Dorsolateral prefrontal cortex (tissue), 120 donors: ENCODE measurements at regions of chr14 and their contacts with region 1.

Region 1: GRCh38 chr14:22852940-22853767 is 16.8 kb downstream of the MMP14 start:
- DNase-seq: peak; percentile 53 to 90 (median 84)
- H3K4me3 ChIP-seq: peak overlapping the region; percentile 29 to 72 (median 51)
- H3K27ac ChIP-seq: peak overlapping the region in 9 of 59 donors; percentile 9 to 79 (median 62)
- H3K27me3 ChIP-seq: no peaks in the 10 kb centered on the region
- CTCF ChIP-seq: peak; percentile 59 to 98 (median 90)

Region 2: DNA sequence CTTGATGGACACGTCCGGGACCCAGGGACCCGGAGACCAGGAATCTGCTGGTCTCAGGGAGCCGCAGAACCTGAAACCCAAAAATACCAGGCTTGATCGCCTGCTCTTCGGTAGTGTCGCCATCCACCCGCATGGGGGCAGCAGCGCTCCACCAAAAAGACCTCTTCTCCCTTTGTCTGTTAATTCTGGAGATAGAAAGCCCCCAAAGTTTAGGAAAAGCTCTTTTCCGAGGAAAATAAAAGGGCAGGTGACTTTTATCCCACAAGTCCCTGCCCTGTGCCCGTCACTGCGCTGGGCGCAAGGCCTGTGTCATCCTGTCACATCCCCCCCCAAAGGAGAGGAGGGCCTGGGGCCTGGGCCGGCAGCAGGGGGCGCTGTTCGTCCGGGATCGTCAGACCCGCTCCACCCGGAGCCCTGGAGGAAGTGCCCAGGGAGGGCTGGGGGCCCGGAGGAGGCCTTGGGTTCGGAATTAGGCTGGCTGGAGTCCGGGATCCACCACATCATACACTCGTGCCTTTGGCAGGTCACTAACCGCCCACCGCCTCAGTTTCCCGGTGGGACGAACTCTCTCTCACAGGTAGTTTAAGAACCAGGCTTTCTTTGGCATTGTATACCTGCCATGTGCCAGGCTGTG is 296.0 kb before region 1 on chr14:
- intact Hi-C with region 1: loop called (anchors 5 to 10 kb)
- DNase-seq: peak; percentile 60 to 85 (median 76)
- H3K4me3 ChIP-seq: peak overlapping the region; percentile 13 to 66 (median 46)
- H3K27ac ChIP-seq: peak overlapping the region in 41 of 59 donors; percentile 5 to 82 (median 55)
- H3K27me3 ChIP-seq: no peaks in the 10 kb centered on the region
- CTCF ChIP-seq: peak in 55 of 56 donors; percentile 80 to 100 (median 99)

Region 3: GRCh38 chr14:22570132-22570949 is 282.8 kb before region 1 on chr14:
- intact Hi-C with region 1: loop called in 1 of 2 experiments (anchors 2 kb)
- DNase-seq: peak in 5 of 10 donors; percentile 50 to 80 (median 74)
- H3K4me3 ChIP-seq: peak overlapping the region in 3 of 59 donors; percentile 6 to 19 (median 9)
- H3K27ac ChIP-seq: peak overlapping the region in 52 of 59 donors; percentile 2 to 80 (median 66)
- H3K27me3 ChIP-seq: no peaks in the 10 kb centered on the region
- CTCF ChIP-seq: peak; percentile 65 to 96 (median 88)

Region 4: GRCh38 chr14:22822571-22823098 is 30.5 kb before region 1 on chr14:
- intact Hi-C with region 1: loop called (anchors 2 kb)
- DNase-seq: peak in 9 of 10 donors; percentile 42 to 80 (median 58)
- H3K4me3 ChIP-seq: peak overlapping the region; percentile 5 to 71 (median 48)
- H3K27ac ChIP-seq: peak overlapping the region in 13 of 59 donors; percentile 12 to 52 (median 40)
- H3K27me3 ChIP-seq: peaks cover 0 to 22% (median 0%) of the 10 kb centered on the region in 45 donors
- CTCF ChIP-seq: peak; percentile 36 to 97 (median 82)